PC-9 (cell line): ENCODE measurements at regions of chr5 and their contacts with region 1.

Region 1: DNA sequence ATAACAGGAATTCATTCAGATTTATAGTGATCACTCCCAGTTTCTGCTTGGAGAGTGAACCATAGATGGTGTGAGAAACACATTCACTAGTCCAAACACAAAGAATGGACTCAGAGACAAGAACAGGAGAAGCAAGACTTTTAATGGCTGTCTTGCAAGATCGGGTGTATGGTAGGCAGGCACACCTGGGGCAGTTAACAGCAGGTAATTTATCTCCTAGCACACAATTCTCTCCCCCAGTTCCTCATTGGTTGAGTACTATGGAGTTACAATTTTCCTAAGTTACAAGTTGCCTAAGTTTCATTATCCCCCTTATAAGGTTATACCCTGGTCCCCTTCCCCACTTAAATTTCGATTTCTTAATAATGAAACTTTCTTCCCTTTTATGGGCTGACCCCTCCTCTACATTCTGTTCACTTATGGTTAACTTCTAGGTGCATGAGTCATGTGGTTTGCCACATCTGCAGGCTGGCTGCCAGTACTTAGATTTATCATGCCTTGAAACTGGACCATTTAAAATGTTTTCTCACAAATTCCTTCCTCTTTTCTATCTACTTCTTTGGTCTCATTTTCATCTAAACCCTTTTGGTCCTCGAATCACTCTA is 623.3 kb downstream of the HINT1 start:
- DNase-seq: peak in 1 of 2 experiments; percentile 58
- H3K4me3 ChIP-seq: no peak overlapping the region
- H3K27ac ChIP-seq: peak overlapping the region; percentile 23; the same call in 1 of the 2 replicates
- H3K4me1 ChIP-seq: peaks cover 44% of the 10 kb centered on the region
- H3K27me3 ChIP-seq: no peaks in the 10 kb centered on the region
- CTCF ChIP-seq: no peak

Region 2: DNA sequence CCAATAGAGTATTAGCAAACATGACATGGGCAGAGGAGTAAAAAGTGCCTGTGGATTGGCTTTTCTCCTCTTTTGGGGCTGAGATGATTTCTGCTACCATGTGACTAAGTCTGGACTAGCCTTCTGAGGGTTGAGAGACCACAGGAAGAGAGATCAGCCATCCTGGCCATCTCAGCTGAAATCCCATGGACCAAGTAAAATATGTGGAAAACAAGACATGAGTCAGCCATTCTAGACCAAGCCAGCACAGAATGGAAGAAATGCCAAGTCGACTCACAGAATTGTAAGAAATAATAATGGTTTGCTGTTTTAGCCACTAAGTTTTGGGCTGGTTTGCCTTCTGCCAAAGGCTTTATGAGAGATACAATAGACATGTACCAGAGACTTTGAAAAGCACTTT is 259.7 kb before region 1 on chr5:
- CTCF ChIA-PET with region 1: no interaction called
- POLR2A ChIA-PET with region 1: no interaction called
- intact Hi-C with region 1: loop called (anchors 10 kb)
- DNase-seq: no peak
- H3K4me3 ChIP-seq: no peak overlapping the region
- H3K27ac ChIP-seq: no peak overlapping the region
- H3K4me1 ChIP-seq: no peaks in the 10 kb centered on the region
- H3K27me3 ChIP-seq: no peaks in the 10 kb centered on the region
- CTCF ChIP-seq: no peak

Region 3: DNA sequence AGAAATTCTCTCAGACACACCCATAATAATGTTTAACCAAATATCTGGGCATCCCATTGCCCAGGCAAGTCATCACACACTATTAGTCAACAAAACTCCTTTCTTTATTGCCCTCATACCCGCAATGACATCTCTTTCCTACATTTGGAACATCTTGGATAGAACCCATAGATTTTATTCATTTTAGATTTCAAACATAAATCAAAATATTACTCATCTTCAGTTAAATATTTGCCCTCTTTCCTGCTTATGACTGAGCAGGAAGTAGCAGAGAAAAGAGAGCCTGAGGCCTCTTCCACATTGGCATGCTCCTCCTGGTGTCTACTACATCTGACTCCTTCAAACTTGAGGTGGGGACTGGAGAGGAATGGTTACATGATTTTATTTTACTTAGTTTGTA is 45.5 kb before region 1 on chr5:
- CTCF ChIA-PET with region 1: no interaction called
- POLR2A ChIA-PET with region 1: no interaction called
- intact Hi-C with region 1: no loop called
- DNase-seq: peak in 1 of 2 experiments; percentile 38
- H3K4me3 ChIP-seq: no peak overlapping the region
- H3K27ac ChIP-seq: peak overlapping the region; percentile 6; the same call in 1 of the 2 replicates
- H3K4me1 ChIP-seq: peaks cover 8% of the 10 kb centered on the region
- H3K27me3 ChIP-seq: no peaks in the 10 kb centered on the region
- CTCF ChIP-seq: no peak

Region 4: DNA sequence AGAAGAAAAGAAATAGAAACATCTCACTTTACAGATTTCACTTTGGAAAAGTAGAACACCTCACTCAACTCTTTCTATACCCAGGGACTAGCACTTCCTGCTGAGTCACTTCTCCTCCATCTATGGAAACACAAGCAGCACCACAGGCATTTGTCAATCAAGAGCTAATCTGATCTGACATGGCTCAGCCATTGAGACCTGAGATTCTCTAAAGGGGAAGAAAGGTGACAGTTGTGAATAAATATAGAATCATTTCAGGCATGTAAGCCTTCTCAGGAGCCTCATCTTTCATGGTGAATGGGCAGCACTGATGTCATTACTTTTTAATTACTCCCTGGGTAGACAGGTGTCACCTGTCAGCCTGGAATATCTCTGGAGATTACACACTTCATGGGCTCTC is 63.5 kb after region 1 on chr5:
- CTCF ChIA-PET with region 1: no interaction called
- POLR2A ChIA-PET with region 1: no interaction called
- intact Hi-C with region 1: no loop called
- DNase-seq: peak; percentile 46 to 61
- H3K4me3 ChIP-seq: no peak overlapping the region
- H3K27ac ChIP-seq: peak overlapping the region; percentile 47
- H3K4me1 ChIP-seq: peaks cover 10% of the 10 kb centered on the region
- H3K27me3 ChIP-seq: no peaks in the 10 kb centered on the region
- CTCF ChIP-seq: no peak

Region 5: DNA sequence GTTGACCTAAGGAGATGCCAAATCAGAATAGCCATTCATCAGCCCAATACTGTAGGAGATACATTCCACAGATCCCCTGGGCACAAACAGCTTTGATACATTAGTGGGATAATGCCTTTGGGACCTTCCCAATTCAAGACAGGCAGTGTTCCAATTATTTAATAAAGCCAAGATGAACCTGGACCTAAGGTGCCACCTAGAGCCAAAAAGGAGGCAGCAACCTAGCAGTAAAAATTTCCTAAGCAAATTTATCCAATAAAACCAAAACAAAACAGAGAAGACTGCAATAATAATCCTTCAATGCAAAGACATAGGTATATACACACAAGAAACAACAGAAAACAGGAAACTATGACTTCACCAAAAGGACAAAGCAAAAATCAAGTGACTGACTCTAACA is 370.4 kb after region 1 on chr5:
- CTCF ChIA-PET with region 1: no interaction called
- POLR2A ChIA-PET with region 1: no interaction called
- intact Hi-C with region 1: no loop called
- DNase-seq: no peak
- H3K4me3 ChIP-seq: no peak overlapping the region
- H3K27ac ChIP-seq: no peak overlapping the region
- H3K4me1 ChIP-seq: no peaks in the 10 kb centered on the region
- H3K27me3 ChIP-seq: no peaks in the 10 kb centered on the region
- CTCF ChIP-seq: peak; percentile 56

Region 6: GRCh38 chr5:131042021-131042789 is 500.5 kb after region 1 on chr5:
- CTCF ChIA-PET with region 1: no interaction called
- POLR2A ChIA-PET with region 1: no interaction called
- intact Hi-C with region 1: no loop called
- DNase-seq: no peak
- H3K4me3 ChIP-seq: no peak overlapping the region
- H3K27ac ChIP-seq: no peak overlapping the region
- H3K4me1 ChIP-seq: no peaks in the 10 kb centered on the region
- H3K27me3 ChIP-seq: no peaks in the 10 kb centered on the region
- CTCF ChIP-seq: no peak